Colonic mucosa (tissue), 4 donors: ENCODE measurements at regions of chr10 and their contacts with region 1.

Region 1: DNA sequence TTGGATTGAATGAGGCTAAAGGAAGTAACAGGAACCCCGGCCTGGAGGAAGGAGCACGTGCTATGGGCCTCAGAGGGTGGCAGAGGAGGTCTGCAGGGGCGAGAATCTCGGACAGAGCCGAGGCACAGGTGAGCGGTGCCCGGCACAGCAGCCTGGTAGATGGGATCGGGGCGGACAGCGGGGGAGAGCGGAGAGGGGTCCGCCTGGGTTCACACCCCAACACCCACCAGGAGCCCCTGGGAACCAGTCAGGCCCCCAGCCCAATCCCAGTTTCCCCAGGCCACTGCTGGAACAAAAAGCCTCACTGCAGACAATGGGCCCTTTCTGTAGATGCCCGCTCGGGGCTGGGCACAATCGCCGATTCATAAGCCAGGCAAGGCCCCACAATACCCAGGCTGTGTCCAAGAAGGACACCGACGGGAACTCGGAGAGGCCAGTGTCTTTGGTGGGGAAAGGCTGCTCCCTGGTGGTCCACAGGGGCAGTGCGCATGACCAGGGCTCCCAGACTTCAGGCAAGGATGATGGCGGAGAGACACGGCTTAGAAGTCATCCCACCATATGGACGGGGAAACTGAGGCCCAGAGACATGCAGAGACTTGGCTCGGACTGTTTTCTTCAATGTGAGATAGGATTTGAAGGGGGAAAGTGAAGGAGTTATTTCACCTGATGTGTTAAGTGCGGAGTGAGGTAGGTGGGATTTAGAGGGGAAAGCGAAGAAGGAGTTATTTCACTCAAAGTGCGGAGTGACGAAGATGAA is 106.9 kb upstream of the GPR26 start:
- DNase-seq: peak; percentile 67
- H3K4me3 ChIP-seq: no peak overlapping the region
- H3K27ac ChIP-seq: no peak overlapping the region
- H3K4me1 ChIP-seq: no peaks in the 10 kb centered on the region
- H3K27me3 ChIP-seq: no peaks in the 10 kb centered on the region
- CTCF ChIP-seq: peak; percentile 98

Region 2: DNA sequence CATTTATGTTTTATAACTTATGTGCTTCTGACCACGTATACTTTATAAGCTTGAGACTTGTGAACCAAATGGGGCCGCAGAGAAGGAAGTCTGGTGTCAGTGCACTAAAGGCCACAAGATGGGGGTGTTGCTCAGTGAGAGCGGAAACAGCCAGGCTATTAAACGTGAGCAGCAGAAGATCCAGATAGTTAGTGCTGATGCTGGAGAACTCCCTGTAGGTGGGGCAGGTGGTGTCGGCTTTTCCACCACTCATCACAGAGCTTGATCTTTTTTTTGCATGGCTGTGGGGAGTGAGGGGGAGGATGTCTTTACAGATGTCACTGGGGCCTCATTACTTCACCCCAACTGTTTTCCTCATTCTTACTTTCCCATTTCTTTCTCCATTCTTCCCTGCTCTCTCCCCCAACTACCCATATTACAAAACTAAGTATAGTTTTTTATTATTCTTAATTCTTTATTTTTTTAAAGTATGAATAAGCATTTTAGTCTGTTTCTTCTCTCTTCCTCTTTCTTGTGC is 515.8 kb before region 1 on chr10:
- intact Hi-C with region 1: loop called (anchors 2 kb)
- DNase-seq: peak; percentile 36
- H3K4me3 ChIP-seq: no peak overlapping the region
- H3K27ac ChIP-seq: no peak overlapping the region
- H3K4me1 ChIP-seq: no peaks in the 10 kb centered on the region
- H3K27me3 ChIP-seq: no peaks in the 10 kb centered on the region
- CTCF ChIP-seq: peak; percentile 65

Region 3: DNA sequence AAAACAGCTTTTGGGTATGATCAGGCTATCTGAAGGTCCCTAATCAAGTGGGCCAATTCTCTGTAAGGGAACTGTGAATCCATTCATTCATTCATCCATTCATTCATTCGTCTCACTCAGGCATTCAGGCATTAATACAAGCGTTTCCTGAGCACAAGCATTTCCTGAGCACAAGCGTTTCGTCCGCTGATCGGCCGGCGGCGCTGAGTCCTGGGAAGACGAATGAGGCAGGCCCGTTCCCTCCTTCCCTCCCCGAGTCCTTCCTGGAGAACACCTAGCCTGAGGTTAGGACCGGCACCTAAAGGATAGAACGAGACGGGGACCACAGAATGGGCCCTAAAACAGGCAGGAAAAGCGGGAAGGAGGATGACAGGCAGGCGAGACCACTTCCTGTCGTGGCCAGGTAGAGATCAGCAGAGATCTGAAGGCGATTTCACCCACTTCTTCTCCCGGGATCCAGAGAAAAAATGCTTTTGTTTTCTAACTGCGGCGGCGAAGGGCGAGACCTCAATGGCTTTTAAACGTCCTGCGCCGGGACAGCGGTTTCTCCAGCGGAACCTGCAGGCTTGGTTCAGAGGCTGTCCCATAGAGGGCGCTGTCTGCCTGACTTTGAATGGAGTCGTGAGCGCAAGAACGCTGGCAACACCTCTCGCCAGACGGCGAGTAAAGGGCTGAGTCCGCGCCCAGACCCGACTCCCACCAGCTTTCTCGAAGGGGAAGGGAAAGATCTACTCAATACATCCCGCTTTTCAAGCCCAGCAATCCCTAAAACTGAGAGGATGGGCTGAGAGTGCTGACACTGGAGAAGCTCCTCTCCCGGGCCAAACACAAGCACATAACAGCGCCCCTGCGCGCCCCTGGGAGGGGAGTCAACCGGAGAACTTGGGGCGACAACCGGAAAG is 426.4 kb before region 1 on chr10:
- intact Hi-C with region 1: loop called (anchors 2 kb)
- DNase-seq: peak; percentile 88
- H3K4me3 ChIP-seq: no peak overlapping the region
- H3K27ac ChIP-seq: no peak overlapping the region
- H3K4me1 ChIP-seq: peaks cover 10% of the 10 kb centered on the region
- H3K27me3 ChIP-seq: peaks cover 68% of the 10 kb centered on the region
- CTCF ChIP-seq: peak; percentile 95

Region 4: GRCh38 chr10:123704812-123705211 is 145.6 kb after region 1 on chr10:
- intact Hi-C with region 1: no loop called
- DNase-seq: no peak
- H3K4me3 ChIP-seq: no peak overlapping the region
- H3K27ac ChIP-seq: no peak overlapping the region
- H3K4me1 ChIP-seq: no peaks in the 10 kb centered on the region
- H3K27me3 ChIP-seq: no peaks in the 10 kb centered on the region
- CTCF ChIP-seq: no peak